Heart left ventricle (tissue), 16 donors: ENCODE measurements at regions of chr3 and their contacts with region 1.

Region 1: GRCh38 chr3:30606301-30607031 is at the start of gene TGFBR2:
- DNase-seq: peak; percentile 94 to 98 (median 97)
- ATAC-seq: peak; percentile 95 to 98 (median 98)
- H3K4me3 ChIP-seq: peak within 1 kb of the TSS; percentile 67 to 98 (median 94)
- H3K27ac ChIP-seq: peak within 1 kb of the TSS; percentile 94 to 100 (median 99)
- H3K4me1 ChIP-seq: peaks cover 3 to 78% (median 43%) of the 10 kb centered on the region in 12 donors
- H3K27me3 ChIP-seq: no peaks in the 10 kb centered on the region
- CTCF ChIP-seq: peak in 9 of 12 donors; percentile 3 to 45 (median 30)
- POLR2A ChIP-seq: peak in 1 of 2 donors; percentile 94
- total RNA-seq, gene TGFBR2: 82.4 to 217 (median 143) TPM

Region 2: GRCh38 chr3:30319713-30320112 is 286.8 kb before region 1 on chr3:
- intact Hi-C with region 1: loop called in 1 of 10 experiments (anchors 10 kb)
- DNase-seq: peak in 4 of 5 donors; percentile 19 to 41 (median 24)
- ATAC-seq: peak; percentile 18 to 78 (median 44)
- H3K4me3 ChIP-seq: no peak overlapping the region
- H3K27ac ChIP-seq: no peak overlapping the region
- H3K4me1 ChIP-seq: peaks cover 0 to 11% (median 0%) of the 10 kb centered on the region in 12 donors
- H3K27me3 ChIP-seq: no peaks in the 10 kb centered on the region
- CTCF ChIP-seq: peak; percentile 18 to 56 (median 36)
- POLR2A ChIP-seq: no peak

Region 3: GRCh38 chr3:30353711-30354467 is 252.6 kb before region 1 on chr3:
- intact Hi-C with region 1: loop called in 3 of 10 experiments (anchors 5 to 10 kb)
- DNase-seq: no peak
- ATAC-seq: peak; percentile 67 to 84 (median 80)
- H3K4me3 ChIP-seq: no peak overlapping the region
- H3K27ac ChIP-seq: peak overlapping the region; percentile 62 to 91 (median 72)
- H3K4me1 ChIP-seq: peaks cover 4 to 62% (median 37%) of the 10 kb centered on the region in 12 donors
- H3K27me3 ChIP-seq: no peaks in the 10 kb centered on the region
- CTCF ChIP-seq: no peak
- POLR2A ChIP-seq: no peak

Region 4: DNA sequence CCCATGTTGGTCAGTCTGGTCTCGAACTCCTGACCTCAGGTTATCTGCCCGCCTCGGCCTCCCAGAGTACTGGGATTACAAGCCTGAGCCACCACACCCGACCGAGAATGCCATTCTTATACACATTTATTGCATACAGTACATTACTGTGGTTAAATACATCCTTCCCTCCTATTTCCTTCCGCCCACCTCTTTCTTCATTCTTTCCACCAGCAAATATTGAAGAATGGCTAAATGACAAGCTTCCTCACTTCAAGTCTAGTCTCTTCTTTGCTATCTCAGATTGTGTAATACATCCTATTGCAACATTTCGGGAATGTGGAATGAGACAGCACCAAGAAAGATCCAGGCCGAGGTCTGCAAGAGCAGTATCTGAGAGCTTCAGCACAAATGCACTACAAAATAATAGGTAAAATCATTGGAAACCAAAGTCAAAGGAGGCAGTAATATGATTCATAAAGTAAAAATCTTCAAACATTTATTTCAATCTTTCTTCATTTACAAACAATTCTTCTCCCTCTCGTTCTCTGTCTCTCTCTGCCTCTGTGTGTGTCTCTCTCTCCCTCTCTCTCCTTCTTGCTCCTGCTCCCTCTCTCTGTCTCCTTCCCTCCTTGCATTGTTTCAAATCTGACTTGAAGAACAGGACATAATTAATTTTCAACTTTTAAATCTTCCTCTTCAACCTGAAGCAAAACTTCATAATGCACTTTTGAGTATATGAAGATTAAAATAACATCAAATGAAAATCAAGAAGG is 94.8 kb before region 1 on chr3:
- intact Hi-C with region 1: loop called in 3 of 10 experiments (anchors 5 to 10 kb)
- DNase-seq: peak in 1 of 5 donors; percentile 34
- ATAC-seq: peak; percentile 49 to 91 (median 83)
- H3K4me3 ChIP-seq: no peak overlapping the region
- H3K27ac ChIP-seq: peak overlapping the region; percentile 6 to 71 (median 49)
- H3K4me1 ChIP-seq: peaks cover 0 to 12% (median 3%) of the 10 kb centered on the region in 12 donors
- H3K27me3 ChIP-seq: no peaks in the 10 kb centered on the region
- CTCF ChIP-seq: no peak
- POLR2A ChIP-seq: no peak

Region 5: DNA sequence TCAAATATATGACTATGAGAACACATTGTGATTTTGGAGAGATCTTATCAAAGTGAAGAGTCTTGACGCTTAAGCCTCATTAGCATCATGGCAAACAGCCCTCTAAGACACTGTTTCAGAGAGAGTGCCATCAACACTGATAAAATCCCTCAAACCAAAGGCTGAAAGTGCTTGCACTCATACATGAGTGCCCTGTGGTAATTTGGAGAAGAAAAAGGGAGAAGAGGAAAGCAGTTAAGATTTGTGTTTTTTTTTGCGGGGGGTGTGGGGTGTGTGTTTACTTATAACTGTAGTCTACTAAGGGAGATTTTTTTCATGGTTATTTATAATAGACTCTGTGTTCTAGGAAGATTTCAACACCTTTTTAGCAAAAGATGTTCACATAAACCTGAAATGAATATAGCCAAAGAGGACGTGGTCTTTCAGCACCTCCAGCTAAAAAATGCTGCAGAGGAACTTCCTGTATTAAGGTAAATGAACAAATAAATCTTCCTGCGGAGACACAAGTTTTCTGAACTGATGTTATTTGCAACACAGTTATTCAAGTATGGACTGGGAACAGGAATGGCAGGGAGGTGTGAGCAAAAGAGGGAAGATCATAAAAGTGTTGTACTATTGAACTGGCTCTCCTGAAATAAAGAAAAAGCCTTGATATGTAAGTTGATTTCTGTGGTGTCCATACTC is 82.0 kb before region 1 on chr3:
- intact Hi-C with region 1: loop called in 4 of 10 experiments (anchors 5 to 10 kb)
- DNase-seq: no peak
- ATAC-seq: no peak
- H3K4me3 ChIP-seq: no peak overlapping the region
- H3K27ac ChIP-seq: no peak overlapping the region
- H3K4me1 ChIP-seq: peaks cover 0 to 56% (median 11%) of the 10 kb centered on the region in 12 donors
- H3K27me3 ChIP-seq: no peaks in the 10 kb centered on the region
- CTCF ChIP-seq: no peak
- POLR2A ChIP-seq: no peak

Region 6: GRCh38 chr3:30934208-30934550 is 327.7 kb after region 1 on chr3:
- intact Hi-C with region 1: no loop called
- DNase-seq: no peak
- ATAC-seq: no peak
- H3K4me3 ChIP-seq: peak overlapping the region in 2 of 12 donors; percentile 15 to 35
- H3K27ac ChIP-seq: no peak overlapping the region
- H3K4me1 ChIP-seq: peaks cover 0 to 2% (median 0%) of the 10 kb centered on the region in 12 donors
- H3K27me3 ChIP-seq: no peaks in the 10 kb centered on the region
- CTCF ChIP-seq: peak; percentile 9 to 62 (median 36)
- POLR2A ChIP-seq: no peak

Region 7: GRCh38 chr3:31092748-31093551 is 486.5 kb after region 1 on chr3:
- intact Hi-C with region 1: no loop called
- DNase-seq: peak in 2 of 5 donors; percentile 11 to 33
- ATAC-seq: peak; percentile 42 to 78 (median 64)
- H3K4me3 ChIP-seq: no peak overlapping the region
- H3K27ac ChIP-seq: no peak overlapping the region
- H3K4me1 ChIP-seq: peaks cover 0 to 19% (median 0%) of the 10 kb centered on the region in 12 donors
- H3K27me3 ChIP-seq: no peaks in the 10 kb centered on the region
- CTCF ChIP-seq: no peak
- POLR2A ChIP-seq: no peak